Prostate gland (tissue), 2 donors: ENCODE measurements at regions of chr11 and their contacts with region 1.

Region 1: GRCh38 chr11:112961146-112961668 is at the start of gene NCAM1:
- DNase-seq: no peak
- H3K4me3 ChIP-seq: peak within 1 kb of the TSS; percentile 31 to 36
- H3K27ac ChIP-seq: no peak within 1 kb of the TSS
- H3K4me1 ChIP-seq: no peaks in the 10 kb centered on the region
- H3K27me3 ChIP-seq: peaks cover 14% of the 10 kb centered on the region
- CTCF ChIP-seq: no peak
- POLR2A ChIP-seq: no peak
- total RNA-seq, gene NCAM1: 3.8 to 39.7 TPM

Region 2: GRCh38 chr11:113113801-113114706 is 152.8 kb after region 1 on chr11:
- intact Hi-C with region 1: loop called (anchors 5 kb)
- DNase-seq: peak; percentile 27
- H3K4me3 ChIP-seq: no peak overlapping the region
- H3K27ac ChIP-seq: no peak overlapping the region
- H3K4me1 ChIP-seq: no peaks in the 10 kb centered on the region
- H3K27me3 ChIP-seq: no peaks in the 10 kb centered on the region
- CTCF ChIP-seq: peak; percentile 29 to 80 (median 64)
- POLR2A ChIP-seq: no peak